ENCODE measurements at regions of chr1 and their contacts with region 1.

Region 1: DNA sequence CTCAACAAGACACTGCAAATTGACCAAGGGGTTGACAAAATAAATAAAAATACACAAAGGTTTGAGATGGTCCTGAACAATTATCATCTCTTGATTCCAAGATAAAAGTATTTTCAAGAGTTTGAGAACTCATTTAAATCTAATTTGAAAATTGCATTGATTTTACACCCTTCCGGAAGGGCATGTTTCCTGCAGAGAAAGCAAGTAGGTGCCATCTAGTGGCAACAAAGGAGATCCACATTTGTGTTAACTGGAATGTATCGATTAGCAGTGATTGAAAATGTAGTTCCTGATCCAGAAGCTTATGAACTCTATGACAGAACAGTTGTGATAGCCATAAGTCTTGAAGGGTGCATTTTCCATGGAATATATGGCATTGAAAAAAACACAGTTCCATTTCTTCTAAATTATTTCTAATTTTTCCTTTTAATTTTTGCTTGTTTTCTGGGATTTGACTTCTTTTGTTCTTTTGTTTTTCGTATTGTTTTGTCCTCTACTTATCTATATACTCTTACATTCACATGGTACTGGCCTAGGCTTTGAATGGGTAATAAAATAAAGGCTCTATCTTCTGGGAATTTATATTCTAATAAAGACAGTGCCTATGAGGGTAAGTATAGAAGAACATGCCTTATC is 143.7 kb downstream of the DNM3 start:
- DNase-seq: no peak
- H3K4me3 Mint-ChIP-seq: no peak overlapping the region
- H3K27ac Mint-ChIP-seq: no peak overlapping the region
- H3K4me1 Mint-ChIP-seq: no peaks in the 10 kb centered on the region
- H3K27me3 Mint-ChIP-seq: no peaks in the 10 kb centered on the region

Region 2: GRCh38 chr1:171654942-171655745 is 329.8 kb before region 1 on chr1:
- CTCF ChIA-PET with region 1: interaction called, 10 read pairs
- intact Hi-C with region 1: loop called (anchors 1 kb)
- DNase-seq: peak; percentile 92
- H3K4me3 Mint-ChIP-seq: peak overlapping the region; percentile 39
- H3K27ac Mint-ChIP-seq: no peak overlapping the region
- H3K4me1 Mint-ChIP-seq: peaks cover 11% of the 10 kb centered on the region
- H3K27me3 Mint-ChIP-seq: peaks cover 5% of the 10 kb centered on the region

Region 3: DNA sequence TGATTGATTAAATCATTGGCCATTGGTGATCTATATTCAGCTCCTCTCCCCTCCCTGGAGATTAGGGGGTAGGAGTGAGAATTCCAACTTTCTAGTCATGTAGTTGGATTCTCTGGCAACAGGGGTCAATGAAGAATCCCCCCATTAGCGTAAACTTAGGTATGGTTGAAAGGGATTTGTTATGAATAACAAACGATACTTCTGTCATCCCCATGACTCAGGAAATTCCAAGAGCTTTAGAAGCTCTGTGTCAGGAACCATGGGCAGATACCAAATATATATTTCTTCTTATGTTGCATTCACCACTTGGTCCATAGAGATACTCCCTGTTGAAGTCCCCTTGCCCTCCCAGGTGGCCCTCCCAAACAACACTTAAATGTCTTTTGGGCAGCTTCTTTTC is 19.2 kb before region 1 on chr1:
- CTCF ChIA-PET with region 1: interaction called, 25 read pairs
- intact Hi-C with region 1: no loop called
- DNase-seq: no peak
- H3K4me3 Mint-ChIP-seq: no peak overlapping the region
- H3K27ac Mint-ChIP-seq: no peak overlapping the region
- H3K4me1 Mint-ChIP-seq: no peaks in the 10 kb centered on the region
- H3K27me3 Mint-ChIP-seq: no peaks in the 10 kb centered on the region

Region 4: GRCh38 chr1:172040466-172040865 is 55.5 kb after region 1 on chr1:
- CTCF ChIA-PET with region 1: no interaction called
- intact Hi-C with region 1: no loop called
- DNase-seq: no peak
- H3K4me3 Mint-ChIP-seq: no peak overlapping the region
- H3K27ac Mint-ChIP-seq: no peak overlapping the region
- H3K4me1 Mint-ChIP-seq: peaks cover 10% of the 10 kb centered on the region
- H3K27me3 Mint-ChIP-seq: no peaks in the 10 kb centered on the region

Measured in activated naive CD4-positive, alpha-beta T cell treated with anti-CD3 and anti-CD28 coated beads for 36 hours (primary cell).